ENCODE measurements at regions of chr19 and their contacts with region 1.

Region 1: DNA sequence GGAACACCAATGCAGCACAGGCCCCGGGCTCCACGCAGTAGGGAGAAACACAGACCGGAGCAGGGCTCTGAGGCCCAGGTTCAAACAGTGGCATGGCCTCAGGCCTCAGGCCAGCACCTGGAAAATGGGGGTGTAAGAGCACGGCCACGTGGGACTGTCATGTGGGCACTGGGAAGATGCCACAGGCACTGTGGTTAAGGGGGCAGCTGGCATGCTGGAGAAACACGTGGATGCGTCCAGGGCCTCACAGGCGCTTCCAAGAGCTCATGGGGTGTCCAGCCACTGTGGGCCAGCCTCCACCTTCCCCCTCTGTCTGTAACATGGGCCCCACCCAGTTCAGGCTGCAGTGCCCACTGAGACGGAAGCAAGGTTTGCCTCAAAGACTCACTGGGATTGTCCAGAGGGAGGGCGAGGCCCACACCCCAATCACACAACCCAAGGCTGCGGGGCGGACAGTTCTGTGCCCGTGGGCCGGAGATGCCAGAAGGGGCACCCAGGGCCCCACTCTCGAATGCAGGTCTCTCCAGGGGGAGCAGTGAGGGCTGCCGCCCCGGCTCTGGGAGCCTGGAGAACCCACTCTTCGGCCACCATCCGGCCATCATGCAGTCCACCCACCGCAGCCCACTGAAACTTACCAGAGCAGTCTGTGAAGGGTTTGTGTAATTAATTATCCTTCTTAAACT is 6.3 kb upstream of the MBD3 start:
- DNase-seq: no peak
- ATAC-seq: no peak
- H3K4me3 ChIP-seq: no peak overlapping the region
- H3K4me3 Mint-ChIP-seq: no peak overlapping the region
- H3K27ac ChIP-seq: no peak overlapping the region
- H3K27ac Mint-ChIP-seq: no peak overlapping the region
- H3K4me1 ChIP-seq: peaks cover 2 to 11% of the 10 kb centered on the region in 2 donors
- H3K4me1 Mint-ChIP-seq: peaks cover 18% of the 10 kb centered on the region
- H3K27me3 ChIP-seq: no peaks in the 10 kb centered on the region
- H3K27me3 Mint-ChIP-seq: no peaks in the 10 kb centered on the region
- CTCF ChIP-seq: no peak

Region 2: GRCh38 chr19:1634242-1634937 is 35.5 kb after region 1 on chr19:
- CTCF ChIA-PET with region 1: no interaction called
- POLR2A ChIA-PET with region 1: interaction called, 10 read pairs
- intact Hi-C with region 1: no loop called
- DNase-seq: no peak
- ATAC-seq: no peak
- H3K4me3 ChIP-seq: no peak overlapping the region
- H3K4me3 Mint-ChIP-seq: no peak overlapping the region
- H3K27ac ChIP-seq: no peak overlapping the region
- H3K27ac Mint-ChIP-seq: no peak overlapping the region
- H3K4me1 ChIP-seq: no peaks in the 10 kb centered on the region
- H3K4me1 Mint-ChIP-seq: peaks cover 7% of the 10 kb centered on the region
- H3K27me3 ChIP-seq: no peaks in the 10 kb centered on the region
- H3K27me3 Mint-ChIP-seq: no peaks in the 10 kb centered on the region
- CTCF ChIP-seq: no peak

Region 3: GRCh38 chr19:1884719-1885334 is 285.9 kb after region 1 on chr19:
- CTCF ChIA-PET with region 1: no interaction called
- POLR2A ChIA-PET with region 1: no interaction called
- intact Hi-C with region 1: no loop called
- DNase-seq: no peak
- ATAC-seq: no peak
- H3K4me3 ChIP-seq: peak overlapping the region; percentile 63 to 92 (median 86)
- H3K4me3 Mint-ChIP-seq: peak overlapping the region; percentile 99
- H3K27ac ChIP-seq: peak overlapping the region; percentile 59 to 62
- H3K27ac Mint-ChIP-seq: peak overlapping the region; percentile 96
- H3K4me1 ChIP-seq: peaks cover 32 to 51% of the 10 kb centered on the region in 2 donors
- H3K4me1 Mint-ChIP-seq: peaks cover 36% of the 10 kb centered on the region
- H3K27me3 ChIP-seq: no peaks in the 10 kb centered on the region
- H3K27me3 Mint-ChIP-seq: no peaks in the 10 kb centered on the region
- CTCF ChIP-seq: no peak

Measured in B cell (primary cell).